ENCODE measurements at regions of chr11 and their contacts with region 1.

Region 1: DNA sequence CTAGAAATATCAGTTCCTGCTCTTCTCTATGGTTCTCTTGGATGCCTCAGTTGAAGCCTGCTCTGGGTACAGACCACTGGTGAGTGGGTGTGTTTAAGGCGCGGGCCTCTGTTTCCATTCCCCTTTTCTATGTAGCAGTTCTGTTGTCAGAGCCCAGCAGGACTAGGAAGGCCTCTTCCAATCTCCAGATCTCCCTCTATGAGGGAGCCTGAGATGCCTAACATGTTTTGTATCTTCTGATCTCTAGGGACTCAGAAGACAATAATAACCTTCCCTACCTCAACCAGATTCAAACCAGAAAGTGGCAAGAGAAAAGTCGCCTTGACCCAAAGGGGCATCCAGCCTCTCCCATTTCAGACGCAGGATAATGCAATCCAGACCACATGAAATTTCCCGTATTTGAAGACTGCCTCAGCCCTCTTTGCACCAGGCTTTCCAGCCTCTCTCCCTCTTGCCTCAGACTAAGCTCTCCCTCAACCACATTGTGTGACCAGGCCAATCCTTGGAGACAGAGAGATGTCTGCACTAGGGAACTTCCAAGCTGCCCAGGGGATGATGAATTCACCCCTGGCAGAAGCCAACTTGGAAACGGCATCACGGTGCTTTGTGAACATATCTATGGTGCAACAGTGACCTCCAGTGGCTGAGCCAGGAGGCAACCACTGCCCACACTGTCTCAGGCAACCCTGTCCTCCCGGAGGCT is 150.1 kb upstream of the UBASH3B start:
- DNase-seq: peak; percentile 38 to 93
- H3K4me3 ChIP-seq: no peak overlapping the region
- H3K27ac ChIP-seq: peak overlapping the region in 1 of 2 donors; percentile 38
- H3K4me1 ChIP-seq: peaks cover 4 to 6% of the 10 kb centered on the region in 2 donors
- H3K27me3 ChIP-seq: no peaks in the 10 kb centered on the region
- CTCF ChIP-seq: peak; percentile 85 to 90 (median 88)

Region 2: DNA sequence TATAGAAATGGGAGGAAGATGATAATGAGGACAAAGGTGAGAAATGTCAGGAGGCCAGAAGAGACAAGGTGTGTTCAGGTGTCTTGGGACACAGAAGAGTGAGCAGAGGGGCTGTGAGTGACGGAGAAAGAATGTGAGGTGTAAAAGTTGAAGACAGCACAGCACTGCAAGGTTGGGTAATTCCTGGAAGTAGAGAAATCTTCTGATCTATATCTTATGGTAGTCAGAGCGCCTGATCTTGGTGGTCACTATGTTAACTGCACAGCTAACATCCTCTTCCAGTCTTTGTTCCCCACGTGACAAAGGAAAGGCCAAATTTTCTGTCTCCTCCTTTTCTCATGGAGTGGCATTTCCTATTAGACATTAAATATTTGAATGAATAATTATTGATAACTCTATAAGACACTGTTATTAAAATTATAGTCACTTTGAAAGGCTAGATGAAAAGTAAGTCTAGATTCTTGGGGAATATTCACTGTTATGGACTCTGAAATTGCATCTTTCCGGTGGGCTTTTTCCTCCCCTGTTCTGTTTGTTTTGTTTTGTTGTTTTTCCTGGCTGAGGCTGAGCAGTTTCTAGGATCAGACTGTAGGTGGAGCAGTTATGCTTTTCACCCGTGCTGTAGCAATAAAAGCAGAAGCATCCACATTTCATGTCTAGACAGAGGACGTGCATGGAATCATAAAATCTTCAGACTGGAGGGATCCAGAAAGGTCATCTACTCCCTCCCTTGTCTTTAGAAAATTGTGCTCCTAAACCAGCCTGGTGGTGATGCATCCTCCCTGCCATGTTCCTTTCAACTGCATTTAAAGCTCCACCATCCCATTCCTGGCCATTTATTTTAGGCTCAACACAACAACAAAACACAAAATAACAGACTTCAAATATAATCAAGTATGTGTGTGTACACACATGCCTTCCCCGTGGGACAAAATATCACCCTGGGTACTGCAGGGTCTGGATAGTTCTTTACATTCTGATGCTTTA is 1186.3 kb before region 1 on chr11:
- intact Hi-C with region 1: loop called (anchors 10 kb)
- DNase-seq: no peak
- H3K4me3 ChIP-seq: no peak overlapping the region
- H3K27ac ChIP-seq: no peak overlapping the region
- H3K4me1 ChIP-seq: no peaks in the 10 kb centered on the region
- H3K27me3 ChIP-seq: no peaks in the 10 kb centered on the region
- CTCF ChIP-seq: peak; percentile 55 to 72 (median 59)

Region 3: GRCh38 chr11:122020902-122021301 is 484.6 kb before region 1 on chr11:
- intact Hi-C with region 1: loop called (anchors 5 kb)
- DNase-seq: no peak
- H3K4me3 ChIP-seq: no peak overlapping the region
- H3K27ac ChIP-seq: no peak overlapping the region
- H3K4me1 ChIP-seq: peaks cover 0 to 3% of the 10 kb centered on the region in 2 donors
- H3K27me3 ChIP-seq: no peaks in the 10 kb centered on the region
- CTCF ChIP-seq: peak; percentile 32 to 50 (median 40)

Region 4: DNA sequence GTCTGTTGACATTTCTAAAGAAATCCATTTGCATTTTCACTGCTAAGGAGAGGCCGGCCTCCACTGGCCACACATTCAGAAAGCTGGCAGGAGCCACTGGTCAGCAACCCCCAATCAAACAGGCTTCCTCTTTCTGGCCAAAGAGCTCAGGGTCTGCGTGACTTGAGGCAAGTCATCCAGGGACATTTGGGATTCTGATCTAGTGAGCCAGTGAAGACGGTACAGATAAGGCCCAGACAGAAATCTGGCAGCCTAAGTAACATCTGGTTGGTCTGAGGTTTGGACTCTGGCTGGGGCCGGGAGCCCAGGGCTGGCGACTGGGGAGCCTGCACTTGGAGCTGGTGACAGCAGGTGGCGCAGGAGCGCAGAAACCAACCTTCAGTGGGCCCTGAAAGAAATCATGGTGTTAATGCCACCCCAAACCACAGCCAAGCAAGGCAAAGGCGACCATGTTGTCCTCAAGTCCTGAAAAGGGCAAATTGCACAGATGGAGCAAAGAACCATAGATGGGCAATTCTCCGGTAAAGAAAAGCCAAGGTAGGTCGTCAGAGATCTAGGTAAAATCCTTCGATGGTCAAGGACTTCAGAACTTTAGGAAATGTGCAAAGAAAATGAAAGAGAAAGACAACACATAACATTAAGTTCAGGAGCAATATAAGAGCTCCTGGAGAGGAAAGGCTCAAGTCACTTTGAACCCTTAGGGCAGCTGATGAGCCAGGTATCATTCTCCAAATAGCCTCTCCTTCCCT is 290.0 kb before region 1 on chr11:
- intact Hi-C with region 1: loop called (anchors 2 kb)
- DNase-seq: peak in 1 of 2 donors; percentile 89
- H3K4me3 ChIP-seq: no peak overlapping the region
- H3K27ac ChIP-seq: peak overlapping the region; percentile 71 to 90
- H3K4me1 ChIP-seq: peaks cover 0 to 36% of the 10 kb centered on the region in 2 donors
- H3K27me3 ChIP-seq: no peaks in the 10 kb centered on the region
- CTCF ChIP-seq: peak; percentile 90 to 92 (median 92)

Region 5: GRCh38 chr11:122293296-122294023 is 212.0 kb before region 1 on chr11:
- intact Hi-C with region 1: loop called (anchors 1 kb)
- DNase-seq: no peak
- H3K4me3 ChIP-seq: no peak overlapping the region
- H3K27ac ChIP-seq: peak overlapping the region; percentile 20 to 30
- H3K4me1 ChIP-seq: no peaks in the 10 kb centered on the region
- H3K27me3 ChIP-seq: no peaks in the 10 kb centered on the region
- CTCF ChIP-seq: peak; percentile 11 to 39 (median 20)

Region 6: DNA sequence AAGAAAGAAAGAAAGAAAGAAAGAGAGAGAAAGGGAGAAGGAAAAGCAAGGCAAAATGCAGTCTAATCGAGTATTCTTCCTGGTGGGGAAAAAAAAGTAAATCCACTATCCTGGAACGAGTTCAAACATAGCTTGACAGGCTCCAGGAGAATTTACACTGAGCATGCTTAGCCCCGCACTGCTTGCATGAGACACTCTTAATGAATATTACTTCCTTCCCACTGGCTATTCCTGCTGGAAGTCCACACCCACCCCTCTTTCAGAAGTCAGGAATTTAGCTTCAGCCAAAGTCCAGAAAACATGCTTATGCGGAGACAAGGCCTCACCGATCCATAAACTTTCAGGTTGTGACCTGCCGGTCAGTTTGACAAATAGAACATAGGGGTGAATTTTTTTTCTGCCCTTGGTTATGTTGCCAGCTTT is 137.6 kb before region 1 on chr11:
- intact Hi-C with region 1: loop called (anchors 2 kb)
- DNase-seq: peak in 1 of 2 donors; percentile 71
- H3K4me3 ChIP-seq: peak overlapping the region in 1 of 2 donors; percentile 62
- H3K27ac ChIP-seq: peak overlapping the region; percentile 71 to 82
- H3K4me1 ChIP-seq: peaks cover 0 to 10% of the 10 kb centered on the region in 2 donors
- H3K27me3 ChIP-seq: no peaks in the 10 kb centered on the region
- CTCF ChIP-seq: no peak

Region 7: DNA sequence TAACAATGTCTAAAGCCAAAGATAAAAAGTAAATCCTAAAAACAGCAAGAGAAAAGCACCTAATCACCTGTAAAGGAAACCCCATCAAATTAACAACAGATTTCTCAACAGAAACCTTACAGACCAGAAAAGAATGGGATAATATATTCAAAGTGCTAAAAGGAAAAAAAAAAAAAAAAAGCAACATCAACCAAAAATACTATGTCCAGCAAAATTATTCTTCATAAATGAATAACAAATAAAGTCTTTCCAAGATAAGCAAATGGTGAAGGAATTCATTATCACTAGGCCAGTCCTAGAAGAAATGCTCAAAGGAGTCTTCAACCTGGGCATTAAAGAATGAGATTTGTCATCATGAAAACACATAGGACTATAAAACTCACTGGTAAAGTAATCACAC is 41.9 kb before region 1 on chr11:
- intact Hi-C with region 1: no loop called
- DNase-seq: no peak
- H3K4me3 ChIP-seq: no peak overlapping the region
- H3K27ac ChIP-seq: no peak overlapping the region
- H3K4me1 ChIP-seq: no peaks in the 10 kb centered on the region
- H3K27me3 ChIP-seq: no peaks in the 10 kb centered on the region
- CTCF ChIP-seq: no peak

Measured in ascending aorta (tissue), 2 donors.